ENCODE measurements at regions of chr10 and their contacts with region 1.

Region 1: GRCh38 chr10:13659897-13660550 is 73.3 kb downstream of the PRPF18 start:
- DNase-seq: peak; percentile 78 to 93
- ATAC-seq: peak; percentile 82
- H3K4me3 ChIP-seq: no peak overlapping the region
- H3K27ac ChIP-seq: no peak overlapping the region
- H3K4me1 ChIP-seq: no peaks in the 10 kb centered on the region
- H3K27me3 ChIP-seq: no peaks in the 10 kb centered on the region

Region 2: DNA sequence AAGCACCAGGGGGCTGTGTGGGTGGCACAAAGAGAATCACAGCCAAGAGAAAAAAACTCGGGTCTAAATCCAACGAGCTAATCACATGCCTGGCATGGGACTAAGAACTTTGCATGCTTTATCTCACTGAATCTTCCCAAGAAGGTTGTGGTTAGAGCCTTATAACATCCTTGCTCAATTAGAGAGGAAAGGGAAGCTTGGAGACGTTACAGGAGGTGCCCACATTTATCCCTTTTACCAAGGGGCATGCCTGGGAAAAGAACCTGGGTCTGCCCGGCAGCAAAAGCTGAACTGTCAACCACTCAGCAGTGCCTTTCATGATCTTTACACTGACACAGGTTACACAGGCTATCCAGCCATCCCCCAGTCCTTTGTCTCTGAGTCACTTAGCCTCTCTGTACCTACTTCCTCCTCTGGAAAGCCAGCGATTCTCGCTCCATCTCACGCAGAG is 116.9 kb after region 1 on chr10:
- intact Hi-C with region 1: loop called (anchors 1 to 2 kb)
- DNase-seq: no peak
- ATAC-seq: no peak
- H3K4me3 ChIP-seq: no peak overlapping the region
- H3K27ac ChIP-seq: no peak overlapping the region
- H3K4me1 ChIP-seq: no peaks in the 10 kb centered on the region
- H3K27me3 ChIP-seq: no peaks in the 10 kb centered on the region

Region 3: GRCh38 chr10:14039968-14040671 is 380.1 kb after region 1 on chr10:
- intact Hi-C with region 1: no loop called
- DNase-seq: no peak
- ATAC-seq: peak; percentile 58
- H3K4me3 ChIP-seq: no peak overlapping the region
- H3K27ac ChIP-seq: no peak overlapping the region
- H3K4me1 ChIP-seq: no peaks in the 10 kb centered on the region
- H3K27me3 ChIP-seq: no peaks in the 10 kb centered on the region

Region 4: GRCh38 chr10:14093730-14094484 is 433.9 kb after region 1 on chr10:
- intact Hi-C with region 1: loop called in 1 of 2 experiments (anchors 10 kb)
- DNase-seq: no peak
- ATAC-seq: no peak
- H3K4me3 ChIP-seq: no peak overlapping the region
- H3K27ac ChIP-seq: no peak overlapping the region
- H3K4me1 ChIP-seq: no peaks in the 10 kb centered on the region
- H3K27me3 ChIP-seq: no peaks in the 10 kb centered on the region

Measured in aorta (tissue), 5 donors.